HepG2 (cell line): ENCODE measurements at regions of chr4 and their contacts with region 1.

Region 1: GRCh38 chr4:77075869-77076799 is at the start of gene CCNI:
- DNase-seq: peak; percentile 90
- ATAC-seq: peak; percentile 83
- H3K4me3 ChIP-seq: peak within 1 kb of the TSS; percentile 76 to 86 (median 86)
- H3K27ac ChIP-seq: peak within 1 kb of the TSS; percentile 95
- H3K4me1 ChIP-seq: peaks cover 27% of the 10 kb centered on the region
- H3K27me3 ChIP-seq: no peaks in the 10 kb centered on the region
- CTCF ChIP-seq: no peak; the same call in 1 of the 2 replicates
- EP300 ChIP-seq: peak in 1 of 2 experiments; percentile 27; a peak in 1 of 4 replicates
- POLR2A ChIP-seq: peak; percentile 57 to 92
- RAD21 ChIP-seq: peak; percentile 36; the same call in 1 of the 2 replicates
- total RNA-seq, gene CCNI: 43.5 and 73.5 TPM in 2 replicates

Region 2: DNA sequence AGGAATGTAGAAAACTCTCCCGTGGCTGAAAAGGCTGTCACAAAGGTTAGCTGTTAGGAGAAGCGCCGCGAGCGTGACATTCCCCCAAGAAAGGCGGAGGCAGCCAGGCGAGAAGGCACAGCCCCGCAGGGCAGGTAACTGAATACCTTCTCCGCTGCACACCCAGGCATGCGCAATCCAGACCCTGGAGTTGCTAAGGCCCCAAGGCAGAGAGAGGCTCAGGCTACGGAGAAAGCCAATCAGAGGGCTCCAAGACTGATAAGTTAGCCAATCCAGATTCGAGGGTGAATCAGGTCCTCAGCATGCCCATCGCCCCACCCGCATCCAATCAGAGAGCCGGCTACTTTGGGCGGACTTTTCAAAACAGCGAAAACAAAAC is 80.4 kb after region 1 on chr4:
- CTCF ChIA-PET with region 1: no interaction called
- POLR2A ChIA-PET with region 1: interaction called, 3 read pairs
- in situ Hi-C with region 1: loop called (anchors 5 kb)
- intact Hi-C with region 1: loop called (anchors 2 kb)
- DNase-seq: peak; percentile 99
- ATAC-seq: peak; percentile 90
- H3K4me3 ChIP-seq: peak overlapping the region; percentile 88 to 99 (median 99)
- H3K27ac ChIP-seq: peak overlapping the region; percentile 93
- H3K4me1 ChIP-seq: peaks cover 27% of the 10 kb centered on the region
- H3K27me3 ChIP-seq: peaks cover 0 to 3% of the 10 kb centered on the region in 2 experiments; a peak in 1 of 5 replicates
- CTCF ChIP-seq: no peak
- EP300 ChIP-seq: peak in 1 of 2 experiments; percentile 43; a peak in 1 of 4 replicates
- POLR2A ChIP-seq: peak in 1 of 2 experiments; percentile 70; a peak in 2 of 4 replicates
- RAD21 ChIP-seq: no peak